Testis (tissue), 5 donors: ENCODE measurements at regions of chr10 and their contacts with region 1.

Region 1: DNA sequence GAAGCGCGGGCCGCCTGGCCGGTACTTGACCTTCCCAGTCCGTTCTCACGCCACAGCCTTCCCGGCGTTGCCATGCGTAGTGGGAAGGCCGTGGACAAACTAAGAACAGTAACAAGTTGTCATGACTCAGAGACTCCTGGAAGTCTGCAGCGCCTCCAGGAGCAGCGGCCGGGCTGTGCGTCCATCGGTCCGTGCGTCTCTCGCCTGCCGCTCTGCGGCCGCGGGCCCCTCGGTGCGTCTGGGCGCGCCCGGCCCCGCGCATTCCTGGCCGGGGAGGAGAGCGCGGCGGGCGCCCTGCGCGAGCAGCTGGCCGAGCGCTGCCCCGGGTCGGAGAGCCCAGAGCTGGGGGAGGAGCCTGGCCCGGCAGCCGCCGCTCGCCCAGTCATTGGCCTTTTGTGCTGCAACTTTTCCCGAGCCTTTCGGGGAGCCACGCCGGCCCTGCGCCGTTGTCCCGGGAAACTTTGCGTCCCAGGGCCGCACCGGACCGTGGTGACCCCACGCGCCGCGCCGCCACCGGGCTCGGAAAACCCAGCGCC is 123.7 kb downstream of the TACC2 start:
- DNase-seq: peak; percentile 84
- H3K4me3 ChIP-seq: peak overlapping the region; percentile 64 to 83
- H3K27ac ChIP-seq: peak overlapping the region; percentile 86 to 95
- H3K4me1 ChIP-seq: peaks cover 6% of the 10 kb centered on the region
- H3K27me3 ChIP-seq: no peaks in the 10 kb centered on the region
- CTCF ChIP-seq: peak in 1 of 3 experiments; percentile 55
- POLR2A ChIP-seq: no peak

Region 2: GRCh38 chr10:121927841-121928527 is 184.7 kb before region 1 on chr10 and contains the start of gene ATE1:
- intact Hi-C with region 1: loop called (anchors 10 kb)
- DNase-seq: peak; percentile 92
- H3K4me3 ChIP-seq: peak within 1 kb of the TSS; percentile 89 to 98
- H3K27ac ChIP-seq: peak within 1 kb of the TSS; percentile 95 to 99
- H3K4me1 ChIP-seq: peaks cover 15% of the 10 kb centered on the region
- H3K27me3 ChIP-seq: no peaks in the 10 kb centered on the region
- CTCF ChIP-seq: no peak
- POLR2A ChIP-seq: no peak
- total RNA-seq, gene ATE1: 34.0 to 41.9 TPM

Region 3: DNA sequence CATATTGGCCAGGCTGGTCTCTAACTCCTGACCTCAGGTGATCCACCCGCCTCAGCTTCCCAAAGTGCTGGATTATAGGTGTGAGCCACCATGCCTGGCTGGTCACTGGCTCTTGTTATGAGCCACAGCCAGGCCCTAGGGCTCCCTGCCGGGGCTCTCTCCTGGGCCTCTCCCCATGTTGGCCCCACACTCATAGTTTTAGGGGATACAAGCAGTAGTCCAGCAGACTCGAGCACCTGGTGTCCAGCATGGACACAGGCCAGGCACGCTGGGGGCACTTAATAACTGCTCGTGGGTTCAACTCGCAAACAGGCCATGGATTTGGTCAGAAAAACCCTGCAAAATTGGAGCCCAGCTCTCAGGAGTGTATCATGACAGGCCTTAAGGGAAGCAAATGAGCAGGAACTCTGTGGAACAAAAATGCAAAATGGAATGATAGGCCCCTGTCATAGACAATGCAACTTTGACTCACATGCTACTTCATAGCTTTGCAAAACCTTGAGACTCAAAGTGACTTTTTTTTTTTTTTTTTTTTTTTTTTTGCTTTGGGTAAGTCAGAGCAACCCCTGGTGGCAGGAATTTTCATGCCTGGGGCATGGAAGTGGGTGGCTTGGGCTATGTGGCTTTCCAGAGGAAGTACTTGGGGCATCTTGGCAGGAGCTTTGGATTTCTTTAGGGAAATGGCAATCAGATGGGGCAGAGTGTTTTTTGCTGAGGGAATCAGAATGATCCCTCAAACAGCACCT is 61.3 kb before region 1 on chr10:
- intact Hi-C with region 1: loop called (anchors 10 kb)
- DNase-seq: peak; percentile 48
- H3K4me3 ChIP-seq: no peak overlapping the region
- H3K27ac ChIP-seq: no peak overlapping the region
- H3K4me1 ChIP-seq: peaks cover 4% of the 10 kb centered on the region
- H3K27me3 ChIP-seq: no peaks in the 10 kb centered on the region
- CTCF ChIP-seq: peak; percentile 41 to 64 (median 47)
- POLR2A ChIP-seq: no peak

Region 4: DNA sequence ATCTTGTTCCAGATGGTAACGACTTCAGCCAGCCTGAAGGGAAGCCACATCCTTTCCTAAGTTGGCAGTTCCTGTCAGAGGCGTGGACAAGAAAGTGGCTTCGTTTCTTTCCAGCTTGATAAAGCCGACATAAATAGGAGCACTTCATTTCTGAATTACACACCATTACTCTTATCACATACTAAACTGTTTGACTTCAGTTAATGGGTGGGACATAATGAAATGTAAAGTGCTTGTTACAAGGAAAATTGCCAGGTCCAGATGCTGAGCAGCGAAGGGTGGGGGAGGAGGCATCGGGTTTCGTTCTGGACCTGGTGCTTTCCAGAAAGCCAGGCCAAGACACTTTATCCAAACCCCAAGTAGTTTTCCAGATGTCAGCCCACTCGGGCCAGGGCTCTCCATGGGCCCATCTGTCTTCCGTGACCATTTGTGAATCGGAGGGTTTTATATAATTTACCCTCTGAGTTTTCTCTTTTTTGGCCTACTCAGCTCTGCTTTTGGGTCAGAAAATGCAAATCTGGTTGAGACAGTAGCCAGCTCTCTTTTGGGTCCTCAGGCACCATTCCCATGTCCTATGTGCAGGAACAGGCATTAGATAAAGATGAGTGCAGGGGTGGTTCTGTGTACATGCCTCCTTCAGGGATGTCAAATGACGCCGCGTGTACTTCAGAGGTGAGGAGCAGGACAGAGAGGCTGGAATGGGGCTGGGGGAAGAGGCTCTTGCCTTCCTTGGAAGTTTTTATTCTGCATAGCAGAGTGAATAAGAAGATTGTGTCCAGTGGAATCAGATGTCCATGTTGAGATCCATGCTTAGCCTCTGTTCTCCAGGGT is 33.5 kb before region 1 on chr10:
- intact Hi-C with region 1: no loop called
- DNase-seq: no peak
- H3K4me3 ChIP-seq: no peak overlapping the region
- H3K27ac ChIP-seq: peak overlapping the region in 1 of 2 donors; percentile 24
- H3K4me1 ChIP-seq: no peaks in the 10 kb centered on the region
- H3K27me3 ChIP-seq: no peaks in the 10 kb centered on the region
- CTCF ChIP-seq: no peak
- POLR2A ChIP-seq: no peak

Region 5: DNA sequence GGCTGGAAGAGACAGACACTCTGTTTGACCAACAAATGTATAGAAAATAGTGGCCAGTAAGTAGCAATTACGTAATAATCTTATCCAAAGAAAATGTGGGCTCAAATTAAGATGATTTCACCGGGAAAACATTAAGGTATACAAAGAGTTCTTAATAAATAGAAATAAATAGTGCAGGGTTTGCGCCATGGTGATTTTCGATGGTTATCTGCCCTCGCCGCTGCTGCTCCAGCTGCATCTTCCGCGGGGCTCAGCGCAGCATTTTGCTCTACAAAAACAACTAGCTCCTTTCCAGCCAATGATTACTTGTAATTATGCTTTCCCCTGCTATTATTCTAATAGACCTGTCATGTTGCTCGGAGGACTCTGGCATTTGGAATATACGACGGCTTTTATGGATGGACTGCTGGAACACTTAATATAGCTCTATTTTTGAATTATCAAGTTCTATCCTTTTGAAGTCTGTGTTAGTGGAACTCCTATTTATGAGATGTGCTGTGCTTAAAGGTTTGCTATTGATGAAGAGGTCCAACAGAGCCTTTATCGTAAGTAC is 1145.3 kb after region 1 on chr10:
- intact Hi-C with region 1: no loop called
- DNase-seq: no peak
- H3K4me3 ChIP-seq: no peak overlapping the region
- H3K27ac ChIP-seq: no peak overlapping the region
- H3K4me1 ChIP-seq: no peaks in the 10 kb centered on the region
- H3K27me3 ChIP-seq: no peaks in the 10 kb centered on the region
- CTCF ChIP-seq: no peak
- POLR2A ChIP-seq: no peak